Aorta (tissue), 5 donors: ENCODE measurements at regions of chr20 and their contacts with region 1.

Region 1: GRCh38 chr20:13819885-13820645 is 35.2 kb downstream of the NDUFAF5 start:
- DNase-seq: peak in 1 of 2 donors; percentile 65
- ATAC-seq: peak; percentile 69
- H3K4me3 ChIP-seq: no peak overlapping the region
- H3K27ac ChIP-seq: no peak overlapping the region
- H3K4me1 ChIP-seq: no peaks in the 10 kb centered on the region
- H3K27me3 ChIP-seq: no peaks in the 10 kb centered on the region

Region 2: GRCh38 chr20:13625304-13625979 is 194.6 kb before region 1 on chr20:
- intact Hi-C with region 1: no loop called
- DNase-seq: no peak
- ATAC-seq: no peak
- H3K4me3 ChIP-seq: no peak overlapping the region
- H3K27ac ChIP-seq: peak overlapping the region; percentile 64
- H3K4me1 ChIP-seq: peaks cover 0 to 1% of the 10 kb centered on the region in 2 donors
- H3K27me3 ChIP-seq: no peaks in the 10 kb centered on the region

Region 3: GRCh38 chr20:13947719-13948118 is 127.7 kb after region 1 on chr20:
- intact Hi-C with region 1: loop called (anchors 10 kb)
- DNase-seq: no peak
- ATAC-seq: no peak
- H3K4me3 ChIP-seq: no peak overlapping the region
- H3K27ac ChIP-seq: no peak overlapping the region
- H3K4me1 ChIP-seq: no peaks in the 10 kb centered on the region
- H3K27me3 ChIP-seq: no peaks in the 10 kb centered on the region

Region 4: GRCh38 chr20:13953227-13953626 is 133.2 kb after region 1 on chr20:
- intact Hi-C with region 1: loop called (anchors 10 kb)
- DNase-seq: no peak
- ATAC-seq: no peak
- H3K4me3 ChIP-seq: no peak overlapping the region
- H3K27ac ChIP-seq: no peak overlapping the region
- H3K4me1 ChIP-seq: no peaks in the 10 kb centered on the region
- H3K27me3 ChIP-seq: no peaks in the 10 kb centered on the region

Region 5: GRCh38 chr20:13995081-13995694 is 175.1 kb after region 1 on chr20 and contains the start of gene MACROD2:
- intact Hi-C with region 1: no loop called
- DNase-seq: peak; percentile 92 to 99
- ATAC-seq: peak; percentile 98
- H3K4me3 ChIP-seq: peak within 1 kb of the TSS; percentile 70 to 83
- H3K27ac ChIP-seq: no peak within 1 kb of the TSS
- H3K4me1 ChIP-seq: no peaks in the 10 kb centered on the region
- H3K27me3 ChIP-seq: no peaks in the 10 kb centered on the region
- total RNA-seq, gene MACROD2: 6.2 to 11.2 TPM

Region 6: GRCh38 chr20:14055127-14055742 is 235.2 kb after region 1 on chr20:
- intact Hi-C with region 1: loop called (anchors 2 kb)
- DNase-seq: no peak
- ATAC-seq: peak; percentile 76
- H3K4me3 ChIP-seq: no peak overlapping the region
- H3K27ac ChIP-seq: no peak overlapping the region
- H3K4me1 ChIP-seq: no peaks in the 10 kb centered on the region
- H3K27me3 ChIP-seq: no peaks in the 10 kb centered on the region